ENCODE measurements at regions of chrX and their contacts with region 1.

Region 1: DNA sequence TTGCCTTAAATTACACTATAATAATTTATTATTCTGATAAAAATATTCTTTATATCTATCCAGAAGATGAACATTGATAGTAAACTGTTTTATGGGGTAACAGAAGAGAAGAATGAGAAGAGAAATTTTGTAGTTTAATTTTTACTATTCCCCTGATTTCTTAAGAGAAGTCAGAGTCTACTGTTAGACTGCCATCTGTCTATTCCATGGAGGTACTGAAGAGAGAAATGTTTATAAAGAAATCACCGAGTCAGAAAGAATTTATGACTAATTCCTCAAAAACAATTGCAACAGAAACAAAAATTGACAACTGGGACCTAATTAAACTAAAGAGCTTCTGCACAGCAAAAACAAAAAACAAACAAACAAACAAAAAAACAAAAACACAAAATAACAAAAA is 149.9 kb downstream of the FGF16 start:
- DNase-seq: peak; percentile 8
- H3K4me3 ChIP-seq: no peak overlapping the region
- H3K27ac ChIP-seq: no peak overlapping the region
- H3K4me1 ChIP-seq: no peaks in the 10 kb centered on the region
- H3K27me3 ChIP-seq: no peaks in the 10 kb centered on the region
- CTCF ChIP-seq: peak; percentile 24 to 53

Region 2: DNA sequence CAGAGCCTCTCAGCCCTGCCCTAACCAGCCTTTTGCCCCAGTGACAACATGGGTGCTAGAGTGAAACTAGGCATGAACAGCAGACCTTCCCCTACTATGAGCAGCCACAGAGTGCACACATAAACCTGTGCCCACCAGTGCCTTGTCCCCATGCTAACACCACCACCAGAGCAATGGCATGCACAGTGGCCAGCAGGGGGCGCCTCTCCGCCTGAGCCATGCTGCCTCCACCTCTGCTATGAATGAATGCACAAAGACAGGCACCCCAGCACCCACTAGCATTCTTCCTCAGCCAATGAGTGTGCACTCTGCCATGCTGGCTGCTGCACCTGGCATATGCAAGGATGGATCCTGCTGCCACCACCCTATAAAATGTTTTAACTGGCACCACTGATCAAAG is 436.8 kb before region 1 on chrX:
- CTCF ChIA-PET with region 1: no interaction called
- dilution Hi-C with region 1: no loop called
- in situ Hi-C with region 1: no loop called
- intact Hi-C with region 1: loop called (anchors 5 kb)
- DNase-seq: no peak
- H3K4me3 ChIP-seq: no peak overlapping the region
- H3K27ac ChIP-seq: no peak overlapping the region
- H3K4me1 ChIP-seq: no peaks in the 10 kb centered on the region
- H3K27me3 ChIP-seq: no peaks in the 10 kb centered on the region
- CTCF ChIP-seq: peak in 1 of 2 donors; percentile 16

Region 3: DNA sequence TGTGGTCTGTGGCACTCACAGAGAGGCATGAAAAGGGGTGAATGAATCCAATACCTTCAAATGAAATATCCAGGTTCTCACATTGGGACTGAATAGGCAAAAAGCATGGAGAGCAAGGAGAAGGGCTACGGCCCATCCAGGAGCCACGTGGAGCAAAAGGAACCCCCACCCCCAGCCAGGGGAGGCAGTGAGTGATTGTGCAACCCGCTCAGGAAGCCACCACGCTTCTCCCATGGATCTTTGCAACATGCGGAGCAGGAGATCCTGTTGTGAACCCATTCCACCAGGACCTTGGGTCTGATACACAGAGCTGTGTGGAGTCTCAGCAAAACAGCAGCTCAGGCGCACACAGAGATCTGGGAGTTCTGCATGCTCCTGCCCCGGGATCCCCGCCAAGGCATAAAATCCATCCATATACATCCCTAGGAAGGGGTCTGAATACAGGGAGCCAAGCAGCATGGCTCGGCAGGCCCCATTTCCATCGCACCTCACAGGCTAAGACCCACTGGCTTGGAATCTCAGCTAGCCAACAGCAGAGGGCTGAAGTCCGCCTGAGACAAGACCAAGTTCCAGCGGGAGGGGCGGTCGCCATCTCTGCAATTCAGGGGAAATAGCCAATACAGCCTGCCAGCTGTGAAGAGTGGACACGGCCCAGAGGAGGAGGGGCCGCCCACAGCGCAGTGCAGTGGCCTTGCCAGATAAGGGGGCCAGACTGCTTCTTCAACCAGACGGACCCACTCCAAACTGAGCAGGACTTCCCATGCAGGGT is 69.7 kb before region 1 on chrX:
- CTCF ChIA-PET with region 1: no interaction called
- dilution Hi-C with region 1: no loop called
- in situ Hi-C with region 1: loop called in 1 of 2 experiments (anchors 10 kb)
- intact Hi-C with region 1: no loop called
- DNase-seq: no peak
- H3K4me3 ChIP-seq: no peak overlapping the region
- H3K27ac ChIP-seq: no peak overlapping the region
- H3K4me1 ChIP-seq: no peaks in the 10 kb centered on the region
- H3K27me3 ChIP-seq: no peaks in the 10 kb centered on the region
- CTCF ChIP-seq: no peak

Measured in mammary epithelial cell (primary cell).